B cell (primary cell): ENCODE measurements at regions of chr1 and their contacts with region 1.

Region 1: DNA sequence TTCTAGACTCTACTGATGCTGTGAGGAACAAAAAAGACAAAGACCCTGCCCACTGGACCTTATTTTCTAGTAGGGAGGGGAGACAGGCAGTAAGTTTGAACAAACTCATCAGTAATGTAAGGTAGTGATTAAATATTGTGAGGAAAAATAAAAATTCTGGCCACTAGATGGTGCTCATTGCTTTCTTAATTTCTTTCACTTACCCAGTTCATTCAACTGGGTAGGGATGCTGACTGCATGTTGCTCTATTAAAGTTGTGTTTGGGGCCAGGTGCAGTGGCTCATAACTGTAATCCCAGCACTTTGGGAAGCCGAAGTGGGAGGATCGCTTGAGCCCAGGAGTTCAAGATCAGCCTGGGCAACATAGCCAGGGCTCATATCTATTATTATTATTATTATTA is 6.3 kb upstream of the KYAT3 start:
- DNase-seq: peak; percentile 82
- ATAC-seq: peak; percentile 93
- H3K4me3 ChIP-seq: no peak overlapping the region
- H3K4me3 Mint-ChIP-seq: no peak overlapping the region
- H3K27ac ChIP-seq: no peak overlapping the region
- H3K27ac Mint-ChIP-seq: no peak overlapping the region
- H3K4me1 ChIP-seq: peaks cover 2 to 3% of the 10 kb centered on the region in 2 donors
- H3K4me1 Mint-ChIP-seq: peaks cover 2% of the 10 kb centered on the region
- H3K27me3 ChIP-seq: no peaks in the 10 kb centered on the region
- H3K27me3 Mint-ChIP-seq: no peaks in the 10 kb centered on the region
- CTCF ChIP-seq: peak; percentile 75

Region 2: GRCh38 chr1:88357729-88358128 is 641.0 kb before region 1 on chr1:
- CTCF ChIA-PET with region 1: no interaction called
- POLR2A ChIA-PET with region 1: no interaction called
- intact Hi-C with region 1: no loop called
- DNase-seq: no peak
- ATAC-seq: no peak
- H3K4me3 ChIP-seq: no peak overlapping the region
- H3K4me3 Mint-ChIP-seq: no peak overlapping the region
- H3K27ac ChIP-seq: no peak overlapping the region
- H3K27ac Mint-ChIP-seq: no peak overlapping the region
- H3K4me1 ChIP-seq: no peaks in the 10 kb centered on the region
- H3K4me1 Mint-ChIP-seq: no peaks in the 10 kb centered on the region
- H3K27me3 ChIP-seq: no peaks in the 10 kb centered on the region
- H3K27me3 Mint-ChIP-seq: no peaks in the 10 kb centered on the region
- CTCF ChIP-seq: no peak

Region 3: DNA sequence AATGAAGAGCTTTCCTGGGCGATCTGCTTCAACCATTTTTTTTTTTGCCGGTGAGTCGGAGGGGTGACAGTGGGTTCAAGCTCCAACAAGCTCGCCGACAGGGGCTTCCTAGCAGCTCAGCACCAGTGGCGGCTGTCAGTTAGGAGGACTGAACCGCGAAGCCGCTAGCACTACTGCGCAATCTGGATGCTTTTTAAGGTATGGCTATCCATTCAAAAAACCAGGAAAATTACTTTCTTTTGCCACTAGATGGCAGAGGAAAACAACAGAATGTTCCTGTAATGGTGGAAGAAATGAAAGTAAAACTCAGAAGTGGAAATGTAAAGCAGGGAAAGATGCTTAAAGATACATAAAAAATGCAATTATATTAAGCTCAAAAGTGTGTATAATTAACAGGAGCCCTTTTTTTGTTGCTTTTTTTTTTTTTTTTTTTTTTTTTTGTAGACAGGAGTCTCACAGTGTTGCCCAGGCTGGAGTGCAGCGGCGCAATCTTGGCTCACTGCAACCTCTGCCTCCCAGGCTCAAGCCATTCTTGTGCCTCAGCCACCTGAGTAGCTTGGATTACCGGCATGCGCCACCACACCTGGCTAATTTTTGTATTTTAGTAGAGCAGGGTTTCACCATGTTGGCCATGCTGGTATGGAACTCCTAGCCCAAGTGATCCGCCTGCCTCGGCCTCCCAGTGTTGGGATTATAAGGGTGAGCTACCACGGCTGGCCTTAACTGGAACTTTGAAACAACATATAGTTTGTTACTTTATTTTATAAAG is 14.7 kb before region 1 on chr1:
- CTCF ChIA-PET with region 1: interaction called, 38 read pairs
- POLR2A ChIA-PET with region 1: no interaction called
- intact Hi-C with region 1: no loop called
- DNase-seq: peak; percentile 76
- ATAC-seq: peak; percentile 77
- H3K4me3 ChIP-seq: peak overlapping the region in 3 of 5 experiments; percentile 15 to 28 (median 23)
- H3K4me3 Mint-ChIP-seq: peak overlapping the region; percentile 76
- H3K27ac ChIP-seq: peak overlapping the region; percentile 40 to 62
- H3K27ac Mint-ChIP-seq: peak overlapping the region; percentile 64
- H3K4me1 ChIP-seq: peaks cover 15 to 17% of the 10 kb centered on the region in 2 donors
- H3K4me1 Mint-ChIP-seq: peaks cover 51% of the 10 kb centered on the region
- H3K27me3 ChIP-seq: no peaks in the 10 kb centered on the region
- H3K27me3 Mint-ChIP-seq: no peaks in the 10 kb centered on the region
- CTCF ChIP-seq: peak; percentile 76

Region 4: DNA sequence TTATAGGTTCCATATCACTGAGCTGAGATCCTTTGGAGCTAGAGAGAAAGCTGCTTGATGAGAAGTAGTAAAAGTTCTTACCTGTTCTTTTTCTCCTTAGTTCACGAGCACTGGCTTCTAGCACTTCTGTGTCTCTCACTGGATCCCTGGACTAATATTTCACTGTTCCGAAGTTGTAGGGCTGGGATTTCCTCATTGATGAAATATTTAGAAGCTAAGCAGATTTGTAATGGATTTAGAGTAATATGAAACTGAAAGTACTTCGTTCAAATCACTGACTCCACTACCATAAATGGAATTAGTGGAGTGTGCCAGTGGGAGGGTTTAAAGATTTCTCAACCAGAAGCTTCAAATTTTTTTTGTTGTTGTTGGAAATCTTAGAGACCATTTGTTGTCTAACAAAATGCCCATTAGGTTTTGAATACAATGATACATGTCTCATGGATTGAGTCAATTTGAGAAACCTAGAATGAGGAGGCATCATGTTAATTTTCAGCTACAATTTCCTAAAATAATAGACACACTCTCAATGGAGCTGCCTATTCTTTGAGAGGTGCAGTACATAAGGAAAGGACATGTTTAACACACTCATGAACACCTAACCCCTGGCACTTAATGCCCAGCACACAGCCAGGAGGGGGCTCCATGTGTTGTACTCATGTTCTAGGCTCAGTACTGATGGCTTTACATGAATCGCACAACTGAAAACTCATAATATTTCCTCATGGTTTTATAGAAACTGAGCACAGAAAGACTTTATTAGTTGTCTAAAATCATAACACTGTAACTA is 66.6 kb after region 1 on chr1 and contains the start of gene GBP1:
- CTCF ChIA-PET with region 1: interaction called, 10 read pairs
- POLR2A ChIA-PET with region 1: no interaction called
- intact Hi-C with region 1: no loop called
- DNase-seq: peak; percentile 58
- ATAC-seq: peak; percentile 70
- H3K4me3 ChIP-seq: peak within 1 kb of the TSS; percentile 50 to 94 (median 58)
- H3K4me3 Mint-ChIP-seq: peak within 1 kb of the TSS; percentile 96
- H3K27ac ChIP-seq: peak within 1 kb of the TSS; percentile 62 to 74
- H3K27ac Mint-ChIP-seq: peak within 1 kb of the TSS; percentile 92
- H3K4me1 ChIP-seq: peaks cover 21 to 30% of the 10 kb centered on the region in 2 donors
- H3K4me1 Mint-ChIP-seq: peaks cover 42% of the 10 kb centered on the region
- H3K27me3 ChIP-seq: no peaks in the 10 kb centered on the region
- H3K27me3 Mint-ChIP-seq: no peaks in the 10 kb centered on the region
- CTCF ChIP-seq: no peak
- total RNA-seq, gene GBP1: 9.4 and 9.8 TPM in 2 replicates

Region 5: GRCh38 chr1:89358287-89358893 is 359.7 kb after region 1 on chr1:
- CTCF ChIA-PET with region 1: interaction called, 150 read pairs
- POLR2A ChIA-PET with region 1: no interaction called
- intact Hi-C with region 1: loop called (anchors 1 kb)
- DNase-seq: peak; percentile 83
- ATAC-seq: peak; percentile 92
- H3K4me3 ChIP-seq: no peak overlapping the region
- H3K4me3 Mint-ChIP-seq: no peak overlapping the region
- H3K27ac ChIP-seq: no peak overlapping the region
- H3K27ac Mint-ChIP-seq: no peak overlapping the region
- H3K4me1 ChIP-seq: no peaks in the 10 kb centered on the region
- H3K4me1 Mint-ChIP-seq: peaks cover 2% of the 10 kb centered on the region
- H3K27me3 ChIP-seq: no peaks in the 10 kb centered on the region
- H3K27me3 Mint-ChIP-seq: peaks cover 3% of the 10 kb centered on the region
- CTCF ChIP-seq: peak; percentile 92

Region 6: DNA sequence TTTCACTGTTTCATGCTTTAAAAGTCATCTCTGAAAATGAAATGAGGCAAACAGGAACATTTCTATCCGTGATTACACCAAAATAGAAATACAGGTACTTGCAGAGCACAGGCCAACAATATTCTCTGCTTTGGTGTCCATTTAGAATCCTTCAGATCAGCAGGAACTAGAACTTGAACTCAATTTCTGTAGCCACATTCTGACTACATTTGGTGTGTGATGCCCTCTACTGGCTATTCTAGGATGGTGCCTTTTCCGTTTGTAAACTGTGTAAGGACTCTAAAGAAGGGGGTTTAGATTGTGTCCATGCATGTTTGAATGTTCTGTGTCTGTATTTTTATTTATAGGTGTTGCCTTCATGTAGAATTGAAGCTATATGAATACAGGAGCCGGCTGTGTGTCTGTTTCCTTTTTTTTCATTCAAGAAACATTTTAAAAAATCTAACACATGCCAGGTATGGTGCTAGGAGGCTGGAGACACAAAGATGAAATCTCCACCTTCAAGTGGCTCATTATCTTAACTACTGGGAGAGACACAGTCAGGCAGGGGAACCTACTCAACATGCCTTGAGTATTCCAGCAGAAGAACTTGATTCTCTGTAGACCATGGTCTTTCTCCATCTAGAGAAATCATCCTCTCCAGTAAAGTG is 988.6 kb after region 1 on chr1:
- CTCF ChIA-PET with region 1: no interaction called
- POLR2A ChIA-PET with region 1: no interaction called
- intact Hi-C with region 1: loop called (anchors 2 kb)
- DNase-seq: peak; percentile 76
- ATAC-seq: peak; percentile 93
- H3K4me3 ChIP-seq: no peak overlapping the region
- H3K4me3 Mint-ChIP-seq: no peak overlapping the region
- H3K27ac ChIP-seq: no peak overlapping the region
- H3K27ac Mint-ChIP-seq: no peak overlapping the region
- H3K4me1 ChIP-seq: no peaks in the 10 kb centered on the region
- H3K4me1 Mint-ChIP-seq: no peaks in the 10 kb centered on the region
- H3K27me3 ChIP-seq: no peaks in the 10 kb centered on the region
- H3K27me3 Mint-ChIP-seq: no peaks in the 10 kb centered on the region
- CTCF ChIP-seq: peak; percentile 94